ENCODE measurements at regions of chr7 and their contacts with region 1.

Region 1: GRCh38 chr7:149205711-149206393 is 10.5 kb downstream of the ZNF282 start:
- DNase-seq: peak; percentile 71
- H3K4me3 Mint-ChIP-seq: peak overlapping the region; percentile 66
- H3K27ac Mint-ChIP-seq: peak overlapping the region; percentile 84
- H3K4me1 Mint-ChIP-seq: peaks cover 45% of the 10 kb centered on the region
- H3K27me3 Mint-ChIP-seq: no peaks in the 10 kb centered on the region
- CTCF ChIP-seq: no peak

Region 2: DNA sequence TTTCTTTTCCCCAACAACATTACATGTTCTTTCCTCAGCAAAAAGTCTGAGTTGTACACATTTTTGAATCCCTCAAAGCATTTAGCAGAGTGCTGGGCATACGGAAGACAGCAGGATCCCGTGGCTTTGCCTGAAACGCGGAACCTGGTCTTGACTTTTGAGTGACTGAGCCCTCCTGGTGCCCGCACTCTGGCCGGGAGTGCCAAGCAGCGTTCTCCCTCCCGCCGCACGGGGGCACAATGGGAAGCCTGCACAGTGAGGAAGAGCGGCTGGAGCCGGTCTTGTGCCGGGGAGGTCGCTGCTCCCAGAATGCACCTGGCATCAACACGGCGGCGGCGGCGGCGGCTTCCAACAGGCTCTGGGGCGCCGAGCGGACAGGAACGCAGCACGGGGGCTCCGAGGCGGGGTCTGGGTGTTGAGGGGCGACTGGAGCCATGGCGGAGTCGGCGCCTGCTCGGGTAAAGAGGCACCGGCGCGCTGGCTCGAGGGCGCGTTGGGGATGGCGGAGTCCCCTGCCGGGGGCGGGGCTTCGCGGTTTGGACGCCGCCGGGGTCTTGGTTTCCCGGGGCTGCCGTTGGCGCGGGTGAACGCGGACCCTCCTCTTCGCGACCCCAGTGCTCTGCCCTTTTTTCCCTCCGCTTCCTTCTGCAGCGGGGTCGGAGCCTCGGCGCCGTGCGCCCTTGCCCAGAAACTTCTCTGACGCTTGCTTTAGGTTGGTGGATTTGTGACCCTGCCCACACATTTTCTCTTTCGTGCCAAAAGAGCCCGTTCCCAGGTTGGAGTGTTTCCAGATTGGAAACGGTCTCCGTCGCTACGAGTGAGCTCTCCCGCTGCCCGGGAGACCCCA is 33.7 kb after region 1 on chr7 and contains the start of gene ZNF212:
- CTCF ChIA-PET with region 1: no interaction called
- intact Hi-C with region 1: loop called (anchors 1 kb)
- DNase-seq: peak; percentile 97
- H3K4me3 Mint-ChIP-seq: peak within 1 kb of the TSS; percentile 90
- H3K27ac Mint-ChIP-seq: peak within 1 kb of the TSS; percentile 97
- H3K4me1 Mint-ChIP-seq: peaks cover 28% of the 10 kb centered on the region
- H3K27me3 Mint-ChIP-seq: no peaks in the 10 kb centered on the region
- CTCF ChIP-seq: peak; percentile 68
- total RNA-seq, gene ZNF212: 17.2 and 18.5 TPM in 2 replicates

Region 3: GRCh38 chr7:151080522-151081169 is 1874.8 kb after region 1 on chr7 and contains the start of gene FASTK:
- CTCF ChIA-PET with region 1: interaction called, 10 read pairs
- intact Hi-C with region 1: no loop called
- DNase-seq: peak; percentile 91
- H3K4me3 Mint-ChIP-seq: peak within 1 kb of the TSS; percentile 98
- H3K27ac Mint-ChIP-seq: peak within 1 kb of the TSS; percentile 61
- H3K4me1 Mint-ChIP-seq: peaks cover 21% of the 10 kb centered on the region
- H3K27me3 Mint-ChIP-seq: no peaks in the 10 kb centered on the region
- CTCF ChIP-seq: no peak
- total RNA-seq, gene FASTK: 113 and 121 TPM in 2 replicates